ENCODE measurements at regions of chr10 and their contacts with region 1.

Region 1: GRCh38 chr10:71888623-71889387 is 37.8 kb upstream of the PSAP start:
- DNase-seq: peak; percentile 77 to 79
- ATAC-seq: peak; percentile 88 to 89
- H3K4me3 ChIP-seq: peak overlapping the region; percentile 57 to 80 (median 68)
- H3K27ac ChIP-seq: peak overlapping the region; percentile 58 to 86 (median 79)
- H3K4me1 ChIP-seq: peaks cover 11 to 15% of the 10 kb centered on the region in 2 donors
- H3K27me3 ChIP-seq: no peaks in the 10 kb centered on the region
- CTCF ChIP-seq: peak in 1 of 5 experiments; percentile 11
- POLR2A ChIP-seq: peak; percentile 86

Region 2: DNA sequence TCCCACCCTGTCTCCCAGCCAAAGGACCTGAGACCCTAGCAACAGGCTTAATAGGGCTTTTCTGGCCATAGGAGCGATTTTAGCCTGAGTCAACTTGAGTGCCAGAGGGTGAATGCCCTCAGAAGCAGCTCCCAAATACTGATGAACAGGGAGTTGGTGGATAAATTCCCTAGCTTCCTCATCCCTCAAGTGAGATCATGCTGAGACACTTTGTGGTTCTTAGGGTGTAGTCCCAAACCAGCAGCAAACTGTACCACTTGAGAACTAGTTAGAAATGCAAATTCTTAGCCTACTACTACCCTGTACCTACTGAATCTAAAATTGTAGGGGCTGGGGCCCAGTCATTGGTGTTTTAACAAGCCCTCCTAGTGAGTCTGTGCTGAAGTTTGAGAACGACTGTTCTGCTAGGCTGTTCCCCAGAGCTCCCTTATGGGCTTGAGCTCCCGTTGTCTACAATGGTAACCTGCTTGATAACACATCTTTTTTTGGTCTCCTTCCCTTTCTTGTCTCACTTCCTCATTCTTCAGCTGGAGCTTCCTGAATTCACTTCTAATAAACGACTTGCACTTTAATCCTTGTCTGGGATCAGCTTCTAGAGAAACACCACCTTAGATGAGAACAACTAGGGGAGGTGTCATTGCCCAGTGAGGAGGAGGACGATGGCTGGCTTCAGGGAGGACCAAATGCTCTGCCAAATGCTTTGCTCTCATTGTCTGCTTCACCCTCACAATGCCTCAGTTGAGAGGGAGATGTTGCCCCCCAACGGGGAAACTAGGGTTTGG is 510.3 kb before region 1 on chr10:
- in situ Hi-C with region 1: no loop called
- intact Hi-C with region 1: loop called (anchors 5 kb)
- DNase-seq: no peak
- ATAC-seq: no peak
- H3K4me3 ChIP-seq: no peak overlapping the region
- H3K27ac ChIP-seq: peak overlapping the region in 1 of 4 donors; percentile 88
- H3K4me1 ChIP-seq: peaks cover 7 to 9% of the 10 kb centered on the region in 2 donors
- H3K27me3 ChIP-seq: no peaks in the 10 kb centered on the region
- CTCF ChIP-seq: no peak
- POLR2A ChIP-seq: no peak

Region 3: DNA sequence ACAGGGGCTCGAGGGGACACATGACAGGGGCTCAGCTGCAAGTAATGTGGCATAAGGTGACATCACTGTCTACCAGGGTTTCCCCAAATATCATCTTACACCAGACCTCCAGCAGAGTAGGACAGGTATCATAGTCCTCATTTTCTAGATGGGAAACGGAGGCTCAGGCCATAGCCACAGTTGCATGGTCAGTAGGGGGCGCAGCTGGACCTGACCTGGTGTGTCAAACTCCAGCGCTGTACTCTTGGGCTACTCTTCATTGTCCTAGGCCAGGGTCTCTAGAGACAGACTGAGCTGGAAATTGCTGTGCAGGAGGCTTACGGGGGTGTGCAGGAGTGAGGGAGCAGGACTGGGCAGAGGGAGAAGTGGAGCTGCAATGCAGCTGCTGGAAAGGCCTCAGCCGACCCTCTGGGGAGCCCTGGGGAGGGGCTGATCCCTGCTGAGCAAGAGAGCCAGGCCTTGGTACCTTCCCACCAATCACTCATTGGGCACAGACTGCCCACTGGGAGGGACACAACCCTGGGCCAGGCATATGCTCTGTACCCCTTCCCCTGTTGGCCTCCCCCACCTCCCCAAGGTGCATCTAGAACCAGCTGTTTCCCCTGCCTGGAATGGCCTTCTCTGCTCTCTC is 402.2 kb before region 1 on chr10:
- in situ Hi-C with region 1: no loop called
- intact Hi-C with region 1: no loop called
- DNase-seq: no peak
- ATAC-seq: peak in 1 of 2 donors; percentile 33
- H3K4me3 ChIP-seq: no peak overlapping the region
- H3K27ac ChIP-seq: no peak overlapping the region
- H3K4me1 ChIP-seq: no peaks in the 10 kb centered on the region
- H3K27me3 ChIP-seq: no peaks in the 10 kb centered on the region
- CTCF ChIP-seq: peak in 3 of 5 experiments; percentile 32 to 37 (median 37)
- POLR2A ChIP-seq: no peak

Region 4: GRCh38 chr10:71835671-71836595 is 52.9 kb before region 1 on chr10:
- in situ Hi-C with region 1: loop called (anchors 5 to 10 kb)
- intact Hi-C with region 1: loop called (anchors 2 kb)
- DNase-seq: peak; percentile 67 to 73
- ATAC-seq: peak; percentile 55 to 66
- H3K4me3 ChIP-seq: peak overlapping the region in 2 of 4 donors; percentile 7 to 28
- H3K27ac ChIP-seq: peak overlapping the region; percentile 81 to 99 (median 97)
- H3K4me1 ChIP-seq: peaks cover 71 to 73% of the 10 kb centered on the region in 2 donors
- H3K27me3 ChIP-seq: no peaks in the 10 kb centered on the region
- CTCF ChIP-seq: no peak
- POLR2A ChIP-seq: no peak

Region 5: GRCh38 chr10:71850637-71851464 is 38.0 kb before region 1 on chr10 and contains the start of gene PSAP:
- in situ Hi-C with region 1: no loop called
- intact Hi-C with region 1: loop called (anchors 2 kb)
- DNase-seq: peak; percentile 98 to 99
- ATAC-seq: peak; percentile 88 to 89
- H3K4me3 ChIP-seq: peak within 1 kb of the TSS; percentile 89 to 97 (median 91)
- H3K27ac ChIP-seq: peak within 1 kb of the TSS; percentile 94 to 99 (median 97)
- H3K4me1 ChIP-seq: peaks cover 48 to 49% of the 10 kb centered on the region in 2 donors
- H3K27me3 ChIP-seq: no peaks in the 10 kb centered on the region
- CTCF ChIP-seq: no peak
- POLR2A ChIP-seq: peak; percentile 100
- total RNA-seq, gene PSAP: 833 to 1,730 (median 1,179) TPM

Measured in gastrocnemius medialis (tissue), 4 donors.